Ovary (tissue), 10 donors: ENCODE measurements at regions of chr11 and their contacts with region 1.

Region 1: DNA sequence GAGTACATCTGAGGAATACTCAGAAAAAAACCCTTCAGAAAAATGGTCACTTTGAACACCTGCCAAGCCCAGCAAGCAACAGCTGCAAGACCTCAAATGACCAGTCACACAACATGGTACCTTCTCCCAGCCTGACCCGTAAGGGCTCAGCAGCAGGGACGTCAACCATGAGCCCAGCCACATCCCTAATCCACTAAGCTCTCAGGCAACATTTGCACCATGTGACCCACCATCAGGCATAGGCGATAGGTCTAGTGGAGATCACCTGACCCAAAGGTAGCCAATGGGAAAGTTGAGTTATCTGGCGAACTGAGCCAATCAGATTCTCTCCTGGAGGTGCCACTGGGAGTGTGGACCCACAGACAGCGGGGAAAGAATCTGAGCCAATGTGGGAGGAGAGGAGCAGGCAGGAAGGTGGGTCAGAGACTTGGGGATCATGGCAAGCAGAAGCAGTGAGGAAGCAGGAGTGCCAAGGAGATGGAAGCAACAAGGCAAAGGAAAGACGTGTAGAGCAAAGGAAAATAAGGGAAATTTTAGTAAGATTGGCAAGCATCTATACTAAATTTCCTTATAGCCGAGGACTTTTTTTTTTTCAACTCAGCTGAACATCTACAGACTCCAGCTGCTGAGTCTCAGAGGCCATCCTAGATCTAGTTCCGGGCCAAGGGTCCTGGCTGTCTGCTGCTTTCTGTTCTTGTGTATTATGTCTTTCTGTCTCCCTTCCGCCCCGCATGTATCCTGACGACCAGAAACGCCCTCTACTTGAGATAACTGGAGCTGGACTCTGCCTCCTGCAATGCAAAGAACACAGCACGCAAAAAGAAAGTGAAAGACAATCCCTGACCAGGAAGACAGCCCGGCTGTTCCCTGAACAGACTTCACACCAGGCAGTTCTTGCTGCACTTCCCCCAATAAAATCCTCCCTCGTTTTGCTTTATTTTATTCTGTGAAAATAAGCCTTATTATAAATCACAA is 11.0 kb upstream of the PLAAT2 start:
- DNase-seq: peak; percentile 43 to 67 (median 59)
- H3K4me3 ChIP-seq: peak overlapping the region; percentile 26
- H3K27ac ChIP-seq: peak overlapping the region; percentile 48 to 63
- H3K4me1 ChIP-seq: peaks cover 15% of the 10 kb centered on the region
- H3K27me3 ChIP-seq: no peaks in the 10 kb centered on the region
- CTCF ChIP-seq: no peak
- EP300 ChIP-seq: no peak
- POLR2A ChIP-seq: no peak

Region 2: GRCh38 chr11:62805076-62805892 is 768.9 kb before region 1 on chr11 and contains the start of gene NXF1:
- intact Hi-C with region 1: loop called in 1 of 4 experiments (anchors 5 kb)
- DNase-seq: peak; percentile 93 to 98 (median 97)
- H3K4me3 ChIP-seq: peak within 1 kb of the TSS; percentile 82
- H3K27ac ChIP-seq: peak within 1 kb of the TSS; percentile 40 to 80
- H3K4me1 ChIP-seq: peaks cover 6% of the 10 kb centered on the region
- H3K27me3 ChIP-seq: no peaks in the 10 kb centered on the region
- CTCF ChIP-seq: peak in 2 of 3 donors; percentile 53 to 56
- EP300 ChIP-seq: peak; percentile 43
- POLR2A ChIP-seq: peak; percentile 99
- total RNA-seq, gene NXF1: 48.8 to 96.8 (median 77.7) TPM